Gastrocnemius medialis (tissue), 4 donors: ENCODE measurements at regions of chr1 and their contacts with region 1.

Region 1: GRCh38 chr1:25602365-25602764 is 14.2 kb upstream of the MAN1C1 start:
- DNase-seq: no peak
- ATAC-seq: no peak
- H3K4me3 ChIP-seq: no peak overlapping the region
- H3K27ac ChIP-seq: no peak overlapping the region
- H3K4me1 ChIP-seq: no peaks in the 10 kb centered on the region
- H3K27me3 ChIP-seq: no peaks in the 10 kb centered on the region
- CTCF ChIP-seq: no peak
- POLR2A ChIP-seq: no peak

Region 2: DNA sequence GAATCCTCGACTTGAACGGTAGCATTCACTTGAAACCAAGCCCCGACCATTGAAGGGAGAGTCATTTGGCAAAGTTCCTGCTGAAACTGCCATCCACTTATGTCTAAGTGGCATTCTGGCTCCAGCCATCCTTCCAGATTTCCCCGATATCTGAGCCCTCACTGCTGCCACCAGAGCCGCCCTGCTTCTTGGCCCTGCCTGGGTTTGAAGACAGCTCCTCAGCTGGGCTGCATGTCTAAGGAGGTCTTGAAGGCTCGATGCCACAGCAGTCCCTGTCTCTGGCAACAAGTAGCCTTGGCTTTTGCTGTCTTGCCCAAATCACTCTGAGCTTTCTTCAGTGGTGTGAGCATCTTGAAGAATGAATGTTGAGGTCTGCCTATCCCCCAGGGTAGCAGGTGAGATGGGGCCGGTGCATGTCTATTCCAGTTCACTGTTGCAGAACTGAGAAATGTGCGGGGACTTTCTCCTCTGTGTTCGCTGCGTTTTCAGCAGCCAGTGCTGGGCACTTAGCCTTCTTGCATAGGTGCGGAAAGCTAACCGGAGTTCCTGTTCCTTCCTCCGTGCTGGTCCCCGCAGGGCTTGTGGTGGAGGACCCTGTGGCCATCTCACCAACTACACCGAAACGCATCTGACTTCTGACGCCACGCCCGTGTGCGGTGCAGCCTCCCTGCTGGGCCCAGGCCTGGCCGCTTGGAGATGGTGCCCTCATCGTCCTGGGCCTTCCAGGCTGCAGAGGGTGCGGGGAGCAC is 43.4 kb after region 1 on chr1:
- in situ Hi-C with region 1: no loop called
- intact Hi-C with region 1: loop called (anchors 1 kb)
- DNase-seq: no peak
- ATAC-seq: no peak
- H3K4me3 ChIP-seq: no peak overlapping the region
- H3K27ac ChIP-seq: no peak overlapping the region
- H3K4me1 ChIP-seq: peaks cover 16 to 32% of the 10 kb centered on the region in 2 donors
- H3K27me3 ChIP-seq: no peaks in the 10 kb centered on the region
- CTCF ChIP-seq: no peak
- POLR2A ChIP-seq: no peak